ENCODE measurements at regions of chr2 and their contacts with region 1.

Region 1: GRCh38 chr2:37005118-37005868 is 39.0 kb upstream of the STRN start:
- DNase-seq: no peak
- H3K4me3 ChIP-seq: no peak overlapping the region
- H3K27ac ChIP-seq: no peak overlapping the region
- H3K4me1 ChIP-seq: no peaks in the 10 kb centered on the region
- H3K27me3 ChIP-seq: no peaks in the 10 kb centered on the region
- CTCF ChIP-seq: peak in 2 of 4 experiments; percentile 18 to 25
- EP300 ChIP-seq: no peak
- POLR2A ChIP-seq: no peak

Region 2: GRCh38 chr2:36785179-36785795 is 220.0 kb before region 1 on chr2:
- intact Hi-C with region 1: loop called (anchors 10 kb)
- DNase-seq: no peak
- H3K4me3 ChIP-seq: no peak overlapping the region
- H3K27ac ChIP-seq: no peak overlapping the region
- H3K4me1 ChIP-seq: no peaks in the 10 kb centered on the region
- H3K27me3 ChIP-seq: peaks cover 0 to 4% (median 0%) of the 10 kb centered on the region in 3 donors
- CTCF ChIP-seq: peak; percentile 49 to 96 (median 79)
- EP300 ChIP-seq: no peak
- POLR2A ChIP-seq: no peak

Measured in sigmoid colon (tissue), 7 donors.